Posterior cingulate gyrus (tissue), 11 donors: ENCODE measurements at regions of chr5 and their contacts with region 1.

Region 1: GRCh38 chr5:134738133-134738962 is at the start of gene CAMLG:
- DNase-seq: peak; percentile 95 to 100 (median 98)

Region 2: DNA sequence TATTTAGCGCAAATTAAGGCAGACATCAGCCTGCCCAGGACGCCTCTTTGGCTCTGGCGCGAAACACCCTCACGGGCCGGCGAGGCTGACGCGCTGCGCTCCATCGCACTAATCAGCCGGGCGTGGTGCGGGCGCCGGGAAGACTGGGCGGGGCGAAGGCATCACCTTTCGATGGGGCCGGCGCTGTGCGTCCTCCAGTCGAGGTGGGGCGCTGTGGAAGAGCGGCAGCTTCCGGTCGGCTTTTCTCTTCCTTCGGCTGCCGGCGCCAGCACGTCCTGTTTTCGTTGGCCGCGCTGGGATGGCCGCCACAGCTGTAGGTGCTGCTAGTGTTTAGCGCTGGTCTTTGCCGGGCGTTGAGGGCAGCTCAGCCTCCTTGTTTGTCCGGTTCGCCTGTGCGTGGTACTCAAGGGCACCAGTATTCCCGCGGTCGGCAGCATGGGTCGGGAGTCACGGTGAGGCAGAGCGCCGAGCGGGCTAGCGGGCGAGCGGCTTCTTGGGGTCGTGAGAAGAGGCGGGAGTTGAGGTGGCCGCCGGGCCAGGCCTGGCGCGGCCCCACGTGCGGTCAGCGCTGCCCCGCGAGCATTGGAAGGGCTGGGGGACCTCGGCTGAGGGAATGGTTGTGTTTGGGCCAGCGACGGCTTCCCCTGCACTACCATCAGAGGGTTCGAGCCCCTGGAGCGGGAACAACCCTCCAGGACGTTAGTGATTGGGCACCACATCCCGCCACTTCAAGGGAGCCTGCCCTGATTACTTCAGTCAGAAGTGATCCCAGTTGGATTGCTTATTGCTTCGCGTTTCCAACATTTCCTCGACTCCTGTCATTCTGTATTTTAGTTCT is 20.4 kb after region 1 on chr5 and contains the start of gene DDX46:
- intact Hi-C with region 1: loop called (anchors 2 kb)
- DNase-seq: peak; percentile 85 to 99 (median 92)

Region 3: DNA sequence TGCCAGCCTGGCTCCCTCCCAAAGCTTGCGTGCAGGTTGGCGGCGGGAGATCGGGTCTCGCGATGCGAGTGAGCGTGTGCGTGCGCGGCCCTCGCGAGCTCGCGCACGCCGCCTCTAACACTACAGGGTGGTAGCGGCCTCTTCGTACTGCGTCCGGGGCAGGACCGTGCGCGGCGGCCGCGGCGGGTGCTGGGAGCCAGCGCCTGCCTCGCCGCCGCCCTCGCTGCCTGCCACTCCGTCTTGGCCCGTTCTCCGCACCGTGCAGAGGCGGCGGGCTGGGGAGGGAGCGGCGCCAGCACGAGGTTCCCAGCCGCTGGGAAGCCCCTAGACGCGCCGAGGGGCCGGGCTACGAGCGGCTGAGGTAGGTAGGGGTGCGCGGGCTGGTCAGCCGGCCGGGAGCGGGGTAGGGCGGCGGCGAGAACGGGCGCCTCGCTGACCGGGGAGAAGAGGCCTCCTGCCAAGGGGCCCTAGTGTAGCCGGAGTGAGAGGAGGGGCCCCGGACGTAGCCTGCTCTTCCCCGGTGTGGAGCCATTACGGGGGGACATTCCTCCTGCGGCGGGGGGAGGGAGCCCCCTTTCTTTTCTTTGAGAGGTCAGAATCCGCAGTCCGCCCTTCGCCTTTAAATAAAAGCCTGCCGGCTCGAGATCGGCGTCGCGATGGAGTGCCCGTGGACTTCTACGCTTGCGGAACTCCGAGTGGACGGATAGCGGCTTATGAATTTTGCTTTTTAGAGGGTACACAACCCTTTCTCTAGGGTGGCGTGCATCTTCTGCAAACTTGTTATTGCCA is 107.7 kb after region 1 on chr5 and contains the start of gene C5orf24:
- intact Hi-C with region 1: loop called (anchors 2 kb)
- DNase-seq: peak; percentile 92 to 99 (median 95)

Region 4: GRCh38 chr5:134873987-134874830 is 135.9 kb after region 1 on chr5 and contains the start of gene TXNDC15:
- intact Hi-C with region 1: loop called (anchors 10 kb)
- DNase-seq: peak; percentile 78 to 98 (median 82)

Region 5: GRCh38 chr5:135013947-135014570 is 275.7 kb after region 1 on chr5:
- intact Hi-C with region 1: no loop called
- DNase-seq: peak in 2 of 10 donors; percentile 8 to 68